ENCODE measurements at regions of chr12 and their contacts with region 1.

Region 1: DNA sequence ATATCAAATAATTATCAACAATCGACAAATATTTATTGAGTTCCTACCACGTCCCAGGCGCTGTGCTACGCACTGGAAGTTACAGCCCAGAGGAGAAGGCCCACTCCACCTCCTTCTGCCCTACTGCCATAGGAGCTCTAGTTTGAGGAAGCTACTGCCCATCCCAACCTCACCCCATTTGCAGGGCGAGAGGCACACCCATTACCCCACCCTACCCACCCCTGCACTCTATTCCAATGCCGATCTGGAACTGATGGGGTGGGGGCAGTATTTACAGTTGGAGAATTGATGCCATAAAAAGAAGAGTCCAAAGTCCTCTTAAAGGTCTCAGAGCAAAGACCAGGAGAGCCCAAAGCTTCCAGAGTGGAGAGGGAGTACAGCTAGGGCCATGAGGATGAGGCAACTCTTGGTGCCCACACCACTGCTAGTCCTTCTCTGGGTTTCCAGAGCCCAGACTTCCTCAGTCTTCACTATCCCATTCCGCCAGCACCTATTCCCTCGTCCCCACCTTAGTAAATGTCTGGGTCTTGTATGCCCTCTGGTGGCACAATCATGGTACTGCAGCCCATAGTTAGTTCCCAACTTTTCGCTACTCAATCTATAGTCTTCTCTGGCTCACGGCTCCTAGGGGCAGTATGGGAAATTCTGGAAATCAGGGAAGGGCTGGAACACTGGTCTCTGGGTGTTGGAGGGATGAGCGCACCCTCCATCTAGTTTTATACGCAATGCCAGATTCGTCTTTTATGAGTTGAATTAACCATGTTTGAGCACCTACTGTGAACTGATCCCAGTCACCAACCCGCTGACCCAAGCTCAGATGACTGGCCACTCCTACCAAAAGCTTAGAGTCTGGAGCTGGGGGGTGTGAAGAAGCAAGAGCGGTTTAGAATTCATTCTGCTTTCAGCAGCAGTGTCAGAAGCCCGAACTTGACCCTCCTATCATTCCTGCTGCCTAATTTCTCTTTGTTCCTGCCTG is 6.9 kb upstream of the ADCY6 start:
- DNase-seq: peak; percentile 16
- ATAC-seq: peak; percentile 88
- H3K4me3 ChIP-seq: no peak overlapping the region
- H3K27ac ChIP-seq: no peak overlapping the region
- H3K4me1 ChIP-seq: no peaks in the 10 kb centered on the region
- H3K27me3 ChIP-seq: no peaks in the 10 kb centered on the region; a peak in 1 of 4 replicates
- CTCF ChIP-seq: peak; percentile 93 to 95 (median 95)
- EP300 ChIP-seq: no peak
- POLR2A ChIP-seq: no peak
- RAD21 ChIP-seq: peak; percentile 97

Region 2: DNA sequence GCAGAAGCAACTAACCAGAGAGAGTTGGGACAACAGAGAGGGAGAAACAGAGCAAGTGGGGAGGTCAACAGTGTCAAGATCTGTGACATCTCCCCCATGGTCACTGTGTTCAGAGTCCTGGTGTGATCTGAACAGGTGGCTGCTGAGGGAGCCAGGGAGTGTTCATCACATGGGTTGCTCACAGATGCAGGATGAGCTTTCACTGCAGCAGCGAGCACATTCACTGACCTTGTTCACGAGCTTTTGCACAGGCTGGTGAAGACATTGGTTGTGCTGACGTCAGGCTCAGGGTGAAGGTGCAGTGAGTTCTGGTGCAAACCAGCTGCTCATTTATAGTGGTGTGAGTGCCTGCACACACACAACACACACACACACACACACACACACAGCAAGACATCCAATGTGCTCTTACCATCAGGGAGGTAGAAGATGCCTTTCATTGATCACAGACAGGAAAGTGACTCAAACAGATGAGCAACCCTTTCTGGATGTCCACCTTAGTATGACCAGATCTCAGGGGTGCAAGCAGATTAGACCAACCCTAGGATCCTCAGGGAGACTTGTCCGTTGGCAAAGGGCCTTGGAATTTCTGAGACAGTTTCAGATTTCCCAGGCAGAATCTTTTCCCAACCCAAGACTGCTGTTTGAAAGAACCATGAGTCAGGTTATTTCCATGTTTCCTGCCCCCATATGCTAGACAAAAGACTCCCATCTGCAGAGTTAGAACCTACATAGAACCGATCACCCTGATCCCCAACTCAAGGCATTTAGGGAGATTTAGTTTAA is 548.4 kb before region 1 on chr12:
- CTCF ChIA-PET with region 1: no interaction called
- POLR2A ChIA-PET with region 1: no interaction called
- RAD21 ChIA-PET with region 1: no interaction called
- SMC1A ChIA-PET with region 1: no interaction called
- in situ Hi-C with region 1: no loop called
- intact Hi-C with region 1: no loop called
- DNase-seq: no peak
- ATAC-seq: no peak
- H3K4me3 ChIP-seq: no peak overlapping the region
- H3K27ac ChIP-seq: no peak overlapping the region
- H3K4me1 ChIP-seq: no peaks in the 10 kb centered on the region
- H3K27me3 ChIP-seq: no peaks in the 10 kb centered on the region; a peak in 1 of 4 replicates
- CTCF ChIP-seq: no peak
- EP300 ChIP-seq: no peak
- POLR2A ChIP-seq: no peak
- RAD21 ChIP-seq: no peak

Region 3: DNA sequence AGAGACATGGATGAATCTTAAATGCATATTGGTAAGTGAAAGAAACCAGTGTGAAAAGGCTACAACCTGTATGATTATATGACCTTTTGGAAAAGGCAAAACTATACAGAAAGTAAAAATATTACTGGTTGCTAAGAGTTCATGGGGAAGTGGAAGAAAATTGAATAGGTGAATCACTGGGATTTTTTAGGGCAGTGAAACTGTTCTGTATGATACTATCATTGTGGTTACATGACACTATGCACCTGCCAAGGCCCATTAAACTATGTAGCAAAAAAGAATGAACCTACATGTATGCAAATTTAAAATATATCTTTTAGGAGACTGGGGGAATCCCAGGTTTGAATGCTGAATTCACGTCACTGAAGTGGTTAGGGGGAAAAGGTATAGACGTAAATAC is 282.9 kb before region 1 on chr12:
- CTCF ChIA-PET with region 1: no interaction called
- POLR2A ChIA-PET with region 1: no interaction called
- RAD21 ChIA-PET with region 1: no interaction called
- SMC1A ChIA-PET with region 1: no interaction called
- in situ Hi-C with region 1: no loop called
- intact Hi-C with region 1: no loop called
- DNase-seq: peak; percentile 38
- ATAC-seq: peak; percentile 97
- H3K4me3 ChIP-seq: no peak overlapping the region
- H3K27ac ChIP-seq: no peak overlapping the region
- H3K4me1 ChIP-seq: no peaks in the 10 kb centered on the region
- H3K27me3 ChIP-seq: no peaks in the 10 kb centered on the region
- CTCF ChIP-seq: no peak
- EP300 ChIP-seq: peak in 1 of 2 experiments; percentile 71; a peak in 3 of 4 replicates
- POLR2A ChIP-seq: no peak
- RAD21 ChIP-seq: no peak

Region 4: GRCh38 chr12:48671231-48671856 is 124.4 kb before region 1 on chr12:
- CTCF ChIA-PET with region 1: interaction called, 4 read pairs
- POLR2A ChIA-PET with region 1: no interaction called
- RAD21 ChIA-PET with region 1: no interaction called
- SMC1A ChIA-PET with region 1: interaction called, 3 read pairs
- in situ Hi-C with region 1: no loop called
- intact Hi-C with region 1: loop called (anchors 10 kb)
- DNase-seq: no peak
- ATAC-seq: no peak
- H3K4me3 ChIP-seq: no peak overlapping the region
- H3K27ac ChIP-seq: no peak overlapping the region
- H3K4me1 ChIP-seq: no peaks in the 10 kb centered on the region
- H3K27me3 ChIP-seq: no peaks in the 10 kb centered on the region
- CTCF ChIP-seq: no peak
- EP300 ChIP-seq: no peak
- POLR2A ChIP-seq: no peak
- RAD21 ChIP-seq: no peak

Region 5: GRCh38 chr12:48744251-48745008 is 51.3 kb before region 1 on chr12:
- CTCF ChIA-PET with region 1: interaction called, 405 read pairs
- POLR2A ChIA-PET with region 1: interaction called, 4 read pairs
- RAD21 ChIA-PET with region 1: interaction called, 9 read pairs
- SMC1A ChIA-PET with region 1: interaction called, 182 read pairs
- in situ Hi-C with region 1: no loop called
- intact Hi-C with region 1: no loop called
- DNase-seq: no peak
- ATAC-seq: no peak
- H3K4me3 ChIP-seq: no peak overlapping the region
- H3K27ac ChIP-seq: no peak overlapping the region
- H3K4me1 ChIP-seq: no peaks in the 10 kb centered on the region
- H3K27me3 ChIP-seq: no peaks in the 10 kb centered on the region
- CTCF ChIP-seq: no peak
- EP300 ChIP-seq: no peak
- POLR2A ChIP-seq: no peak
- RAD21 ChIP-seq: no peak

Region 6: GRCh38 chr12:48758221-48758620 is 37.5 kb before region 1 on chr12:
- CTCF ChIA-PET with region 1: interaction called, 405 read pairs
- POLR2A ChIA-PET with region 1: interaction called, 11 read pairs
- RAD21 ChIA-PET with region 1: interaction called, 158 read pairs
- SMC1A ChIA-PET with region 1: interaction called, 182 read pairs
- in situ Hi-C with region 1: loop called (anchors 5 kb)
- intact Hi-C with region 1: loop called (anchors 1 kb)
- DNase-seq: no peak
- ATAC-seq: no peak
- H3K4me3 ChIP-seq: no peak overlapping the region
- H3K27ac ChIP-seq: no peak overlapping the region
- H3K4me1 ChIP-seq: no peaks in the 10 kb centered on the region
- H3K27me3 ChIP-seq: no peaks in the 10 kb centered on the region
- CTCF ChIP-seq: no peak
- EP300 ChIP-seq: no peak
- POLR2A ChIP-seq: no peak
- RAD21 ChIP-seq: no peak

Region 7: DNA sequence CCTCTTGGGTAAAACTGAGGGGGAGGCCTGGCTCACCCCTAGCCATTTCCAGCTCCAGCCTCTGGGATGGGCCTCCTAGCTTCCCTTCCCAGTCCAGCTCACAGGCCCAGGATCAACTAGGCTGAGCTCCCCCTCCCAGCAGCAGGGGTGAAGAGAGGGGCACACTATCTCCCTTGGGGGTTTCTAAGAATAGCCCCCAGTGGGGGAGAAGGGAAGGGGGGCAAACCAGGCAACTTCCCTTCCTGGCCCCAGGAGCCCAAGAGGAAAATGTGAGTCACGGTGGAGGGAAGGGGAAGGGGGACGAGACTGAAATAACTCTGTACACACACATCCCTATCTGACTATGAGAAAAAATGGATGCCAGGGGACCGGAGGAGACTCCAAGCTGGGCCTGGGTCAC is 15.9 kb before region 1 on chr12:
- CTCF ChIA-PET with region 1: interaction called, 18 read pairs
- POLR2A ChIA-PET with region 1: interaction called, 3 read pairs
- RAD21 ChIA-PET with region 1: interaction called, 6 read pairs
- SMC1A ChIA-PET with region 1: interaction called, 15 read pairs
- in situ Hi-C with region 1: no loop called
- intact Hi-C with region 1: no loop called
- DNase-seq: no peak
- ATAC-seq: peak; percentile 23; the same call in 1 of the 3 replicates
- H3K4me3 ChIP-seq: no peak overlapping the region
- H3K27ac ChIP-seq: no peak overlapping the region
- H3K4me1 ChIP-seq: no peaks in the 10 kb centered on the region
- H3K27me3 ChIP-seq: no peaks in the 10 kb centered on the region
- CTCF ChIP-seq: no peak
- EP300 ChIP-seq: no peak
- POLR2A ChIP-seq: no peak
- RAD21 ChIP-seq: no peak

Region 8: DNA sequence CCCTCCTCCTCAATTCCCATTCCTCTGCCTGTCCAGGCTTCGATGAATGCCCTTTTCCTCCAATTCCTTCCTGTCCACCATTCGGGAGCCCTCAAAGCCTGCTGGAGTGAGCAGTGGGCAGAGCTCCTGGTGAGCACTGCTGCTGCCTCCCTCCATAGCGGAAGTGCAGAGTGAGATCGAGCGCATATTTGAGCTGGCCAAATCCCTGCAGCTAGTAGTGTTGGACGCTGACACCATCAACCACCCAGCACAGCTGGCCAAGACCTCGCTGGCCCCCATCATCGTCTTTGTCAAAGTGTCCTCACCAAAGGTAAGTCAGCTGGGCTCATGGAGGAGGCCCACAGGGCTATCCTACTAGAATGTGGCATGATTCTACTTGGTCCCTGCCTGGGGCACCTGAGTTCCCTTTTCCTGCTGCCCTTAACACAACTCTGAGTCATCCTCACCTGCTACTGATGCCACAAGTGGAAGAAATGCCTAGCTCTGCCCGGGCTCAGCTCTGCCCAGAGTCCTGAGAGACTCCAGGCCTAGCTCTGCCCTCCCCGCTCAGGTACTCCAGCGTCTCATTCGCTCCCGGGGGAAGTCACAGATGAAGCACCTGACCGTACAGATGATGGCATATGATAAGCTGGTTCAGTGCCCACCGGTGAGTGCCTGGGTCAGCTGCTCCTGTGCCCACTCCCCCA is 30.6 kb after region 1 on chr12:
- CTCF ChIA-PET with region 1: no interaction called
- POLR2A ChIA-PET with region 1: no interaction called
- RAD21 ChIA-PET with region 1: no interaction called
- SMC1A ChIA-PET with region 1: no interaction called
- in situ Hi-C with region 1: no loop called
- intact Hi-C with region 1: no loop called
- DNase-seq: no peak
- ATAC-seq: no peak
- H3K4me3 ChIP-seq: no peak overlapping the region
- H3K27ac ChIP-seq: no peak overlapping the region
- H3K4me1 ChIP-seq: no peaks in the 10 kb centered on the region; the same call in 1 of the 2 replicates
- H3K27me3 ChIP-seq: no peaks in the 10 kb centered on the region; a peak in 1 of 4 replicates
- CTCF ChIP-seq: no peak
- EP300 ChIP-seq: no peak
- POLR2A ChIP-seq: no peak
- RAD21 ChIP-seq: no peak

Measured in GM12878 (cell line).